Activated T-helper 1 cell treated with anti-CD3 and anti-CD28 coated beads, Interleukin-12 subunit alpha, Interleukin-12 subunit beta, Interleukin-2, Interleukin-4 antibody, amounts not matched to agents 30 ng/mL and 10 ng/mL and 1 ng/mL, durations not matched to agents 14 hours and 24 hours and 36 hours (primary cell): ENCODE measurements at regions of chr10 and their contacts with region 1.

Region 1: GRCh38 chr10:28532383-28533175 is at the start of gene WAC:
- DNase-seq: peak; percentile 94
- H3K4me3 Mint-ChIP-seq: peak within 1 kb of the TSS; percentile 97
- H3K27ac Mint-ChIP-seq: peak within 1 kb of the TSS; percentile 100
- H3K4me1 Mint-ChIP-seq: peaks cover 54% of the 10 kb centered on the region
- H3K27me3 Mint-ChIP-seq: no peaks in the 10 kb centered on the region
- total RNA-seq, gene WAC: 130 and 135 TPM in 2 replicates

Region 2: DNA sequence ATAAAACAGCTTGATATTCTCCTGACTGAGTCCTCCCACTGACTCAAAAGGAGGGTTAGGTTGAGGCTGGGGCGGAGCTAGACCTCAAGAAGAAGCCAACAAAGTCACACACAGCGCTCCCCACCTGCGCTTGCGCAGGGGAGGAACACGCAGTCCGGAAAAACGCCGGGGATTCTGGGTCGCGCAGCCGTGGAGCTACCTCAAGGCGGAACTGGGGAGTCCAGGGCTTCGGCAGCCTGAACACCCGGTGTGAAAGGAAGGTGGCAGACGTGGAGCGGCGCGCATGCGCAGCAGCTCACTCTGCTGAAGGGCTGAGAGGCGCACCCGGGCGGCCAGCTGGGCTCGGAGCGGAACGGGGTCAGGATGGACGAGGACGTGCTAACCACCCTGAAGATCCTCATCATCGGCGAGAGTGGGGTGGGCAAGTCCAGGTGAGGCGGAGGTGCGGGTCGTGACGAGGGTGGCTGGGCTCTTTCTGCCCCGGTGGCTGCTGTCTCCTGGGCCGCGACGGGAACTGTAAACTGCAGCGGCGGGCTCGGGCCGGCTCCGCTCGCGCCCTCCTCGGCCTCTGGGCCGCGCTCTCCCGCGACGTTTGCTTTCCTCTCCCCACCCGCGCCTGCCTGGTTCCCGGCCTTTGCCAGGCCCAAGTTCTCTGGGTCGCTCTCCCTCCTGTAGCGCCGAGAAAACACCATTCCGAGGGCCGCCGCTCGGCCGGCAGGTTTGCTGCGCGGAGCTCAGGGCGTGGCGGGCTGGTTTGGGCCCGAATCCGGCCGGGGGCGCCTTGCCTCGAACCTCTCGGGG is 1028.4 kb before region 1 on chr10 and contains the start of gene RAB18:
- intact Hi-C with region 1: loop called (anchors 1 kb)
- DNase-seq: peak; percentile 98
- H3K4me3 Mint-ChIP-seq: peak within 1 kb of the TSS; percentile 96
- H3K27ac Mint-ChIP-seq: peak within 1 kb of the TSS; percentile 96
- H3K4me1 Mint-ChIP-seq: peaks cover 38% of the 10 kb centered on the region
- H3K27me3 Mint-ChIP-seq: no peaks in the 10 kb centered on the region
- total RNA-seq, gene RAB18: 61.6 and 63.7 TPM in 2 replicates

Region 3: DNA sequence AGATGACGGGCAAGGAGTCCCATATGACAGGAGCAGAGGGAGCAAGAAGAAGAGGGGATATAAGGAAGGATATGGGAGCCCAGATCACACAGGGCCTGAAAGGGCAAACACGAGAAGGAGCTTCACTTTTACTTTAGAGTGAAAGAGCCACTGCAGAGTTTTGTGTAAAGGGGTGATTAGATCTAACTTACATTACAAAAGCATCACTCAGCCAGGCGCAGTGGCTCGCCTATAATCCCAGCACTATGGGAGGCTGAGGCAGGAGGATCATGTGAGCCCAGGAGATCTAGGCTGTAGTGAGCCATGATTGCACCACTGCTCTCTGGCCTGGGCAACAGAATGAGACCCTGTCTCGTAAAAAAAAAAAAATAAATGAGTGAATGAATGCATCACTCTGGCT is 320.8 kb before region 1 on chr10:
- intact Hi-C with region 1: no loop called
- DNase-seq: no peak
- H3K4me3 Mint-ChIP-seq: no peak overlapping the region
- H3K27ac Mint-ChIP-seq: no peak overlapping the region
- H3K4me1 Mint-ChIP-seq: no peaks in the 10 kb centered on the region
- H3K27me3 Mint-ChIP-seq: no peaks in the 10 kb centered on the region

Region 4: GRCh38 chr10:28254290-28254985 is 278.1 kb before region 1 on chr10:
- intact Hi-C with region 1: no loop called
- DNase-seq: no peak
- H3K4me3 Mint-ChIP-seq: no peak overlapping the region
- H3K27ac Mint-ChIP-seq: no peak overlapping the region
- H3K4me1 Mint-ChIP-seq: no peaks in the 10 kb centered on the region
- H3K27me3 Mint-ChIP-seq: no peaks in the 10 kb centered on the region

Region 5: GRCh38 chr10:28302638-28303488 is 229.7 kb before region 1 on chr10 and contains the start of gene MPP7:
- intact Hi-C with region 1: loop called (anchors 1 kb)
- DNase-seq: peak; percentile 93
- H3K4me3 Mint-ChIP-seq: peak within 1 kb of the TSS; percentile 85
- H3K27ac Mint-ChIP-seq: peak within 1 kb of the TSS; percentile 41
- H3K4me1 Mint-ChIP-seq: peaks cover 32% of the 10 kb centered on the region
- H3K27me3 Mint-ChIP-seq: peaks cover 34% of the 10 kb centered on the region
- total RNA-seq, gene MPP7: 0.15 and 0.29 TPM in 2 replicates

Region 6: DNA sequence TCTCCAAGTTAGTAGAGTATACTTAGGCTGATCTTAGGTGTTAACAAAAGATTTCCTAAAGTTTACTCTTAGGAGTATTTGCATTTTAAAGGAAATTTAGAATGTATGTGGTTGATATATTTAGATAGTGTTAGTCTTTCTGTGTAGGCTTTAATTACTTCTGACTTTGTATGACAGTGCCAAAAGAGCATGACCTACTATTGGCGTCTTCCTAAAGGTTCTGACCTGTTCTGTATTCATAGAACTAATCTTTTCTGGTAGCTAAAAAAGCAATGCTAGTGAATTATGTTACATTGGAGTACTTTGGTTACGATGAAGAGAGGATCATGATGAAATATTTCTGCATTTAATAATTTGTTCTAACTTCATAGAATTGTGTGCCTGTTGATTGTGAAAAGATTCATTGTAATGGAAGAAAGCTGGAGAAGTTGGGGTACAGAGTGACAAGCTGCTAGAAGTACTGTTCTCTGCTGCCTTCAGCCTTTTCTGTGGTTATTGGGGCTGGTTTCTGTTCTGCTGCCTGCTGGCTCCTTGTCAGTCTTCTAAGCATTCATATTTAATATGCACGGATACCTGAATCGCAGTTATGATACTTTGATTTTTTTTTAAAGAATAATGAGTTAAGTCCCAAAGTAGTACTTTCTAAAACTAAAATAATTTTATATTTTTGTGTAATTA is 13.5 kb after region 1 on chr10:
- intact Hi-C with region 1: loop called (anchors 1 kb)
- DNase-seq: no peak
- H3K4me3 Mint-ChIP-seq: peak overlapping the region; percentile 51
- H3K27ac Mint-ChIP-seq: peak overlapping the region; percentile 70
- H3K4me1 Mint-ChIP-seq: peaks cover 61% of the 10 kb centered on the region
- H3K27me3 Mint-ChIP-seq: no peaks in the 10 kb centered on the region

Region 7: DNA sequence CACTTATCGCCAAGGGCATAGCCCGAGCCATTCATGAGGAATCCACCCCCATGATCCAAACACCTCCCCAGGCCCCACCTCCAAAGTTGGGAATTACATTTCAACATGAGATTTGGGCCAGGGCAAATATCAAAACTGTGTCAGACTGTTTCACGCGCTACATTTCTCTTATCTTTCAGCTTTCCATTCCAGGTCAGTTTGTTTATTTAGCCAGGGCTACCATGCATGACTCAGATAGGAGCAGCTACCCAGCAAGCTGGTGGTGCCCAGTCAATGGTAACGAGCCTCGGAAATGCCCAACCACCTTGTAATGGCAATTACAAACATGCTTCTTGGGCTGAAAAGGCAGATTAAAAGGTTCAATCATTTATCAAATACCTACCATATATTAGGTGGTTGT is 101.2 kb after region 1 on chr10:
- intact Hi-C with region 1: no loop called
- DNase-seq: no peak
- H3K4me3 Mint-ChIP-seq: no peak overlapping the region
- H3K27ac Mint-ChIP-seq: no peak overlapping the region
- H3K4me1 Mint-ChIP-seq: no peaks in the 10 kb centered on the region
- H3K27me3 Mint-ChIP-seq: peaks cover 2% of the 10 kb centered on the region

Region 8: GRCh38 chr10:28676968-28677887 is 144.6 kb after region 1 on chr10 and contains the start of gene BAMBI:
- intact Hi-C with region 1: loop called (anchors 1 kb)
- DNase-seq: peak; percentile 90
- H3K4me3 Mint-ChIP-seq: peak within 1 kb of the TSS; percentile 82
- H3K27ac Mint-ChIP-seq: no peak within 1 kb of the TSS
- H3K4me1 Mint-ChIP-seq: peaks cover 27% of the 10 kb centered on the region
- H3K27me3 Mint-ChIP-seq: peaks cover 78% of the 10 kb centered on the region
- total RNA-seq, gene BAMBI: 0.23 and 0.81 TPM in 2 replicates